ENCODE measurements at regions of chr17 and their contacts with region 1.

Region 1: DNA sequence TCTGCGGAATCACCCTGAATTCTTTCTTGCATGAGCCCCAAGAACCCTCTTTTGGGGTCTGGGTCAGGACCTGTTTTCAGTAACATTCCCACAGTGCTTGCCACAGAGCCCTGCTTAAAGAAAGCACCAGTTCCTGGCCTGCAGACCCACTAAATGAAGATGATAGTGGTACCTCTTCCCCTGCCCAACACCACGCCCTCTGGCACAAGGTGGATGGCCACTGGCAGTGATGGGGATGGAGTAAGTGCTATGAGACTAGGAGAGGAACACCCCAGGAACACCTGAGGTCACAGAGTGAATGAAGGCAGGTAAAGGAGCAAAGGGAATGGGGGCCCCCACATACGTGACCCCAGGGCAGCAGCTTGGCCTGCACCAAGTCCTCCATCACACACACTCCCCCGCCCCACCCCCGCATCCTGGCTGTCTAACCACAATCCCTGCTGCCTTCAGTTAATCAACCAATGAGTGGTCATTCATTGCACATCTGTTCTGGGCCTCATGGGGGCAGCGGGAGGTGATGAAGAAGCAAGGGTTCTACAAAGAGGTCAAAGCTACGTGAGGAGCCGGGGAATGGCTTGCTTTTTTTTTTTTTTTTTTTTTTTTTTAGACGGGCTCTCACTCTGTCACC is 3.9 kb upstream of the PPY start:
- DNase-seq: peak in 1 of 2 experiments; percentile 35
- ATAC-seq: no peak
- H3K4me3 ChIP-seq: no peak overlapping the region
- H3K27ac ChIP-seq: no peak overlapping the region
- H3K4me1 ChIP-seq: no peaks in the 10 kb centered on the region
- CTCF ChIP-seq: no peak
- EP300 ChIP-seq: no peak
- POLR2A ChIP-seq: no peak
- RAD21 ChIP-seq: no peak

Region 2: GRCh38 chr17:43932357-43932756 is 13.8 kb before region 1 on chr17:
- CTCF ChIA-PET with region 1: interaction called, 43 read pairs
- POLR2A ChIA-PET with region 1: no interaction called
- DNase-seq: no peak
- ATAC-seq: no peak
- H3K4me3 ChIP-seq: no peak overlapping the region
- H3K27ac ChIP-seq: no peak overlapping the region
- H3K4me1 ChIP-seq: peaks cover 14% of the 10 kb centered on the region
- CTCF ChIP-seq: no peak
- EP300 ChIP-seq: no peak
- POLR2A ChIP-seq: no peak
- RAD21 ChIP-seq: no peak

Region 3: GRCh38 chr17:43966271-43966670 is 20.1 kb after region 1 on chr17:
- CTCF ChIA-PET with region 1: interaction called, 38 read pairs
- POLR2A ChIA-PET with region 1: no interaction called
- DNase-seq: peak in 1 of 2 experiments; percentile 29
- ATAC-seq: peak; percentile 21 to 36; a peak in 3 of 6 replicates
- H3K4me3 ChIP-seq: no peak overlapping the region
- H3K27ac ChIP-seq: no peak overlapping the region
- H3K4me1 ChIP-seq: no peaks in the 10 kb centered on the region
- CTCF ChIP-seq: no peak
- EP300 ChIP-seq: no peak
- POLR2A ChIP-seq: no peak
- RAD21 ChIP-seq: no peak

Region 4: GRCh38 chr17:43974382-43975266 is 28.4 kb after region 1 on chr17:
- CTCF ChIA-PET with region 1: interaction called, 38 read pairs
- POLR2A ChIA-PET with region 1: no interaction called
- DNase-seq: no peak
- ATAC-seq: no peak
- H3K4me3 ChIP-seq: no peak overlapping the region
- H3K27ac ChIP-seq: no peak overlapping the region
- H3K4me1 ChIP-seq: no peaks in the 10 kb centered on the region
- CTCF ChIP-seq: no peak
- EP300 ChIP-seq: no peak
- POLR2A ChIP-seq: no peak
- RAD21 ChIP-seq: no peak

Region 5: DNA sequence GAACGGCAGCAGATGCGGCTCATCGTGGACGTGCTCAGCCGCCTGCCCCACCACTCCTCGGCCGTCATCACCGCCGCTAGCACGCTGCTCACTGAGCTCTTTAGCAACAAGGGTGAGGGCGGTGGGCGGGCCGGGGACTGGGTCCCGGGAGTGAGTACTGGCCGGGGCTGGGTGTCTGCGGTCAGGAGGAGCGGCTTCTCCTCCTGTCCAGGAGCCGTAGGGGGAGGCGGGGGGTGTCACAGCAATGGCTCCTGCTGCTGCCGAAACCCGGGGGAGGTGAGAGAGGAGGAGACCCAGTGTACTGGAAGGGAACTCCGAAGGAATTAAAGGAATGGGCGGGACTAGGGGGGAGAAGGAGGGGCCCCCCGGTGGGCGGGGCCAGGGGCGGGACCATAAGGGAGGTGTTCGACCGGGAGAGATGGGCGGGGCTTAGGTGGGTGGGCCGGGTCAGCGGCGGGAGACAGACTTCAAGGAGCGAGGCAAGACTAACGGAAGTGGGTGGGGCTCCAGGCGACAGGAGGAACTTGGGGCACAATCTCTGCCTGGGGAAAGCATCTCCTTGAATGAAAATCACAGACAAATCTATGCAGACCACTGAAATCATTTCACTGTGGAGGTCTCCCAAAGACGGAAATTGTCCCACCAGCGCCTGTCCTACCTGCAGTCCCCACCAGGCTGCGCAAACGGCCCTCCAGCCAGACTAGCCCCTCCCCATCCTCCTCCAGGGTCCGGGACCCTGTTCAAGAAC is 60.6 kb after region 1 on chr17:
- CTCF ChIA-PET with region 1: interaction called, 657 read pairs
- POLR2A ChIA-PET with region 1: no interaction called
- DNase-seq: peak; percentile 97
- ATAC-seq: peak; percentile 78 to 90
- H3K4me3 ChIP-seq: peak overlapping the region; percentile 51
- H3K27ac ChIP-seq: peak overlapping the region; percentile 67 to 83
- H3K4me1 ChIP-seq: peaks cover 18% of the 10 kb centered on the region
- CTCF ChIP-seq: peak; percentile 37; the same call in 2 of the 3 replicates
- EP300 ChIP-seq: no peak
- POLR2A ChIP-seq: peak; percentile 23
- RAD21 ChIP-seq: peak in 1 of 2 experiments; percentile 33; a peak in 3 of 5 replicates

Region 6: GRCh38 chr17:44044067-44044466 is 97.9 kb after region 1 on chr17:
- CTCF ChIA-PET with region 1: interaction called, 48 read pairs
- POLR2A ChIA-PET with region 1: no interaction called
- DNase-seq: no peak
- ATAC-seq: no peak
- H3K4me3 ChIP-seq: no peak overlapping the region
- H3K27ac ChIP-seq: 0 out of 6 replicates have a peak overlapping the region, but pooled peaks of 1 of the 2 experiments have one; percentile 0
- H3K4me1 ChIP-seq: peaks cover 11% of the 10 kb centered on the region
- CTCF ChIP-seq: no peak
- EP300 ChIP-seq: no peak
- POLR2A ChIP-seq: no peak
- RAD21 ChIP-seq: no peak

Region 7: GRCh38 chr17:44308320-44308818 is 362.2 kb after region 1 on chr17 and contains the start of gene RUNDC3A:
- CTCF ChIA-PET with region 1: no interaction called
- POLR2A ChIA-PET with region 1: no interaction called
- DNase-seq: peak; percentile 80 to 95
- ATAC-seq: peak; percentile 74 to 87
- H3K4me3 ChIP-seq: peak within 1 kb of the TSS; percentile 47
- H3K27ac ChIP-seq: peak within 1 kb of the TSS in 1 of 2 experiments; percentile 70; a peak in 3 of 6 replicates
- H3K4me1 ChIP-seq: peaks cover 15% of the 10 kb centered on the region
- CTCF ChIP-seq: no peak
- EP300 ChIP-seq: no peak
- POLR2A ChIP-seq: no peak
- RAD21 ChIP-seq: no peak
- polyA plus RNA-seq, gene RUNDC3A: 0.45 and 0.57 TPM in 2 replicates

Measured in A549 (cell line).